Panc1 (cell line): ENCODE measurements at regions of chr15 and their contacts with region 1.

Region 1: DNA sequence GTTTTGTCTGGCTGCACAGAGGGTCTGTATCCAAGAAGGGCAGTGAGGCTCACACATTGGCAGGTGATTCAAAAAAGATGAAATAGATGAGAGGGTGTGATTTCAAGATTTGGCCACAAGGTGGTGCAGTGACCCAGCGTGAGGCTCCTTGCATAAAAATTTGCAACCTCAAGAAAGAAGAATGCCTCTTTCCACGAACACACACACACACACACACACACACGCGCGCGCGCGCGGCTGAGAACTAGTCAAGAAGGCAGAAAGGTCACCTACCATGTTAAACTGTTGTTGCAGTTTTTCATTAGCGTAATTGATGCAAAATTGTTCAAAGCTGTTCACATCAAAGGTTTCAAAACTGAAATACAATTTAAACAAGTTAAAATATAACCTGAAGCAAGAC is 39.2 kb downstream of the MYO5C start:
- DNase-seq: peak; percentile 81
- ATAC-seq: peak; percentile 61; the same call in 1 of the 2 replicates
- H3K4me3 ChIP-seq: no peak overlapping the region
- H3K27ac ChIP-seq: no peak overlapping the region
- H3K4me1 ChIP-seq: peaks cover 15% of the 10 kb centered on the region
- H3K27me3 ChIP-seq: no peaks in the 10 kb centered on the region
- CTCF ChIP-seq: peak; percentile 89

Region 2: DNA sequence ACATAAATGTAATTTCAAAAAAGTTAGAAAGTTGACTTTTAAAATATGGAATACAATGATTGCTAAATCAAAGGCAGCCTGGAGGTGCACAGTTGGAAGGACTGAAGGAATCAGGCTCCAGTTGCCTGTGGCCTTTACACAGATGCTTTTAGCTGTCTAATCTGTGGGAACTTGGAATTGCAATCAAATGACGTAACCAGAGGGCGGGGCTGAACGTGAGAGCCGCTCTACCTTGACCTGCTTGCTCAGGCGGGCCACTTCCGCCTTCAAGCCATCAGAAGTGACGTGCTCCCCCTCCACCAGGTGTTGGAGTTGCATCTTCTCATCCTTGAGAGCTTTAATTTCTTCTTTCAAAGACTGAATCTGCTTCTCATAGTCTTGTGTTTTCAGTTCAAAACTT is 27.5 kb before region 1 on chr15:
- CTCF ChIA-PET with region 1: no interaction called
- POLR2A ChIA-PET with region 1: no interaction called
- in situ Hi-C with region 1: no loop called
- intact Hi-C with region 1: no loop called
- DNase-seq: no peak
- ATAC-seq: no peak
- H3K4me3 ChIP-seq: no peak overlapping the region
- H3K27ac ChIP-seq: no peak overlapping the region
- H3K4me1 ChIP-seq: no peaks in the 10 kb centered on the region
- H3K27me3 ChIP-seq: no peaks in the 10 kb centered on the region
- CTCF ChIP-seq: no peak

Region 3: GRCh38 chr15:52331490-52332240 is 75.3 kb after region 1 on chr15:
- CTCF ChIA-PET with region 1: interaction called, 3 read pairs
- POLR2A ChIA-PET with region 1: no interaction called
- in situ Hi-C with region 1: no loop called
- intact Hi-C with region 1: loop called (anchors 10 kb)
- DNase-seq: peak; percentile 81
- ATAC-seq: peak; percentile 92
- H3K4me3 ChIP-seq: no peak overlapping the region
- H3K27ac ChIP-seq: no peak overlapping the region
- H3K4me1 ChIP-seq: peaks cover 21% of the 10 kb centered on the region
- H3K27me3 ChIP-seq: no peaks in the 10 kb centered on the region
- CTCF ChIP-seq: peak; percentile 74

Region 4: DNA sequence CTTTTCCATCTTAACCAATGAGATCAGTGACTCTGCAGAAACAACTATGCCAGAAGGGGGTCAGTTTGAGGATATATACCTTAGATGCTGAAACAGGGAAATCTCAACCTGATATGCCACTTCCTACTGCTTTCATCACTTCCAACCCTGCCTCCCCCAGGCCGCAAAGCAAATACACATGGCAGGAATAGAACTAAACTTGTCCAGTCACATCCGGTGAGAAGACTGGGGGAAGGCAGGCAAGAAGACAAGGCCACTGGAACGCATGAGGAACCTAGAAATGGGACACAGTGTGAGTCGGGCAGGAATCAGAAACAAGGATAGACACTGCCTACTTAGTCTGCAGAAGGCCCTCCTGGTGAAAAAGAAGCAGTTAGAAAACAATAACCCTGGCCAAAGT is 181.7 kb after region 1 on chr15:
- CTCF ChIA-PET with region 1: no interaction called
- POLR2A ChIA-PET with region 1: no interaction called
- in situ Hi-C with region 1: no loop called
- intact Hi-C with region 1: loop called (anchors 10 kb)
- DNase-seq: no peak
- ATAC-seq: no peak
- H3K4me3 ChIP-seq: no peak overlapping the region
- H3K27ac ChIP-seq: no peak overlapping the region
- H3K4me1 ChIP-seq: 0 out of 2 replicates have a peak, but pooled peaks cover 7% of the 10 kb centered on the region
- H3K27me3 ChIP-seq: no peaks in the 10 kb centered on the region
- CTCF ChIP-seq: no peak

Region 5: DNA sequence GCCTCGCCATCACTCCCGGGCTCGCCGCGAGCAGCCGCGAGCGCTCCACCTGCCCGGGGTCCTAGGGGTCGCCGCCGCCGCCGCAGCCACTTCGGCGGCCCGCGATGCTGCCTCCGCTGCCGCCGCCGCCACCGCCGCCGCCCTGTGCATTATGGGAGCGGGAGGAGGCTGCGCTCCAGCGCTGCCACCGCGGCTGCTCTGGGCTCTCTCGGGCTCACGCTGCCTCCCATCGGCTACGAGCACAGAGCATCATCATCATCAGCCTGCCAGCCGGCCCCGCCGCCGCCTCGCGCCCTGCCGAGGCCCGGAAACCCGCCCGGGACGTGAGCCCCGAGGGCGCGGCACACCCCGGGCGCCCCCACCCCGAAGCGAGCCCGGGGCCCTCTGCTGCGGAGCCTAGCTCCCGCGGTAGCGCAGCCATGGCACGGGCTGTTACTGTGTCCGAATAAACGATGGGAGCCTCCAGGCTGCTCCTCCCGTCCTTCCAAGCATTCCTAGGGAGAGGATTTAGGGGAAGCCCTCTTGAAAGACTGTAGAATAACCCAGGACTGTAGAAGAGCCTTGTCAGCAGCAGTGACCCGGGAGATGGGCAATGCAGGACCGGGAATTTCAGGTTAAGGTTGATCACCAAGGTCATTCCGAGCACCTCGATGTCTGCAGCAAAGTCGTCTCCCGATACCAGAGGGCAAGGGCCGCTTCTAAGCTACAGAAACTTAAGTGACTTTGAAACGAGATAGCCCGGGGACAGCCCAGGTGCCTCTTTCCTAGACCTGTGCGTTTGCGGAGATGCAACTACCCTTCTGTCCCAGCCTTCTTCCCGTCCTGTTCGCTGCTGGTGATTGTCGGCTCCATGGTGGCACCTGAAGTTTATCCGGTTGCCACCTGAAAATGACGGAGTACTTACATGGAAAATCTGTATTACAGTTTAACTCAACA is 272.9 kb after region 1 on chr15:
- CTCF ChIA-PET with region 1: interaction called, 8 read pairs
- POLR2A ChIA-PET with region 1: no interaction called
- in situ Hi-C with region 1: no loop called
- intact Hi-C with region 1: loop called (anchors 10 kb)
- DNase-seq: no peak
- ATAC-seq: peak; percentile 94
- H3K4me3 ChIP-seq: peak overlapping the region; percentile 74 to 79
- H3K27ac ChIP-seq: peak overlapping the region; percentile 82
- H3K4me1 ChIP-seq: peaks cover 9% of the 10 kb centered on the region
- H3K27me3 ChIP-seq: no peaks in the 10 kb centered on the region
- CTCF ChIP-seq: peak; percentile 41

Region 6: DNA sequence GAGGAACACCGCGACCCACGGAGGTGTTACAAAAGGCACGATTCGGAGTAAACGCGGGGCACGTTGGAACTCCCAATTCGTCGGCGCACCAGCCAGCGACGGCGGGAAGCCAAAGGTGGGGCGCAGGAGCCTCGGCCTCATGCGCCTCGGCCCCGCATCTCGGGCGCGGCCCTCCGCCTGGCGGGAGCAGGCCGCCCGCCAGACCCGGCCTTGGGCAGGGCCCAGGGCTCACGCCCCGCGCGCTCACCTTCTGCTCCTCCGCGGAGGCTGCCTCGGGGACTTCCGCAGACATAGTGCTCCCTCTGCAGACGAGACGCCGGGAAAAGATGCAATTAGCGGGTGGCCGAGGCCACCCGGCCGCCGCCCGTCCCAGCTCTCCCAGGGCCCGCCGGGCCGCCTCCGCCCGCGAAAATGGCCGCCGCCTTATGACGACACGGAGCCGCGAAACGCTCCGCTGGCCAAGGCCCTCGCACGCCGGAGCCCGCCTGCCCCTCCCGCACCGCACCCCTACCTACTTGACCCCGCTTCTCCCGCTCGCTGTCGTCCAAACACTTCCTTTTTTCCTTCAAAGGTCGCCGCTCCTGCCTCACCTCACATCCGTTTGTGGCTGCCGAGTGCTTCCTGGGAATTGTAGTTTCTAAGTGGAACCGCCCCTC is 312.4 kb after region 1 on chr15 and contains the start of gene ARPP19:
- CTCF ChIA-PET with region 1: no interaction called
- POLR2A ChIA-PET with region 1: no interaction called
- in situ Hi-C with region 1: no loop called
- intact Hi-C with region 1: loop called (anchors 10 kb)
- DNase-seq: peak; percentile 69
- ATAC-seq: peak; percentile 96
- H3K4me3 ChIP-seq: peak within 1 kb of the TSS; percentile 86 to 97
- H3K27ac ChIP-seq: peak within 1 kb of the TSS; percentile 97
- H3K4me1 ChIP-seq: peaks cover 21% of the 10 kb centered on the region
- H3K27me3 ChIP-seq: no peaks in the 10 kb centered on the region
- CTCF ChIP-seq: no peak
- total RNA-seq, gene ARPP19: 153 TPM

Region 7: GRCh38 chr15:52735231-52736089 is 479.1 kb after region 1 on chr15:
- CTCF ChIA-PET with region 1: interaction called, 6 read pairs
- POLR2A ChIA-PET with region 1: no interaction called
- in situ Hi-C with region 1: no loop called
- intact Hi-C with region 1: loop called (anchors 1 kb)
- DNase-seq: peak; percentile 77
- ATAC-seq: peak; percentile 95
- H3K4me3 ChIP-seq: no peak overlapping the region
- H3K27ac ChIP-seq: no peak overlapping the region
- H3K4me1 ChIP-seq: no peaks in the 10 kb centered on the region
- H3K27me3 ChIP-seq: no peaks in the 10 kb centered on the region
- CTCF ChIP-seq: peak; percentile 76